ENCODE measurements at regions of chr15 and their contacts with region 1.

Region 1: DNA sequence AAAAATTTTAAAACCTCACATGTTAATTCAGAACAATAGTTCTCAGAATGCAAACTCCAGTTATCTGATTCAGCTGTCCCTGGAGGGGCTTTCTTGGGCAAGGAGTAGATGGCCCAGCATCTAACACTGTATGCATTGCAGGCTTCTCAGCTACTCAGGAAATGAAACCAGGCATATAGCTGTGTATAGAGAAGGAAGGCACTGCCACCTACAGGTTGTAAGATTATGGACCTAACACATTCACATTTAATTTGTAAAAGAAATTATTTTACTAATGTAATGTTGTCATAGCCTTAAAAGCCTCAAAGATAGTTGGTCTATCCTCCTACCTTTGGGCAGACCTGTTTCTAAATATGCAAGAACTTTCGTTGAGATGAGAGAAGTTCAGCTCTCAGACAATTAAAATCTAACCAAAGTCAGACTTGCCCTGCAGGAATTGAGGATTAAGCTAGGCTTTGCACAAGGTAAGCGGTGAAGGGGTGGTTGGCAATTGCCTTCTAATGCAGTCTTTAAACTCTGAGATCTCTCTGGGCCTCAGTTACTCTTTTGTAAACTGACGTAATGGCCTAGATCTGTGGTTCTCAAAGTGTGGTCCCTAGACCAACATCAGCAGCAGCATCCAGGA is 132.8 kb upstream of the SLC24A5 start:
- DNase-seq: peak; percentile 57
- H3K27ac ChIP-seq: no peak overlapping the region
- CTCF ChIP-seq: peak; percentile 85

Region 2: GRCh38 chr15:47196057-47196456 is 792.0 kb before region 1 on chr15:
- CTCF ChIA-PET with region 1: interaction called, 29 read pairs
- POLR2A ChIA-PET with region 1: no interaction called
- DNase-seq: peak; percentile 68
- H3K27ac ChIP-seq: no peak overlapping the region
- CTCF ChIP-seq: peak; percentile 88

Region 3: GRCh38 chr15:47711654-47712053 is 276.4 kb before region 1 on chr15:
- CTCF ChIA-PET with region 1: interaction called, 25 read pairs
- POLR2A ChIA-PET with region 1: no interaction called
- DNase-seq: no peak
- H3K27ac ChIP-seq: no peak overlapping the region
- CTCF ChIP-seq: peak; percentile 77

Region 4: DNA sequence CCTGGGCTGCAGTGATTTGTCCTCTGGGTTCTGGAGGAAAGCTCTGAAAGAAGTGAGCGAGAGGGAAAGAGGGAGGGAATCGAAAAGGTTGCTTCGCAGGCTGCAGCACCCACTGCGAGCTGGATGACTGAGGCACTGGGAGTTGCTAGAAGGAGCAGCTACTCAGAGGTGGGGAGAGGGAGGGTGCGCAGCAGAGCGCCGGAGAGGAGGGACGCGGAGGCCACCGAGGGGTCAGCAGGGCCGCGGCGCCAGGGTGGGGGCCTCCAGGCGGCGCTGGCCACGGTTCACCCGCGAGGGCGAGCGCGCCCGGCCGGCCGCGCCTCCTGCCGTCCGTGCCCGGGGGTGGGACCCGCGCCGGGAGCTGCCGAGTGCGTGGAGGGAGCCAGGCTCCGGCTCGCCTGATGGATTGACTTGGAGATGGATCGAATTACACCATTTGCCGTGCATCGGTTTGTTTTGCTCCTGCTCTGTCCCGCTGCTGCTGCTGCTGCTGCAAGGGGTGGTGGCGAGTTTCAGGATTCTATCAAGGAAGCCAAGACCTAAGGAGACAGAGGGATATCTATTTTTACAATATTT is 270.9 kb before region 1 on chr15 and contains the start of gene SEMA6D:
- CTCF ChIA-PET with region 1: interaction called, 25 read pairs
- POLR2A ChIA-PET with region 1: no interaction called
- DNase-seq: peak; percentile 86
- H3K27ac ChIP-seq: peak within 1 kb of the TSS; percentile 82
- CTCF ChIP-seq: peak; percentile 83

Region 5: DNA sequence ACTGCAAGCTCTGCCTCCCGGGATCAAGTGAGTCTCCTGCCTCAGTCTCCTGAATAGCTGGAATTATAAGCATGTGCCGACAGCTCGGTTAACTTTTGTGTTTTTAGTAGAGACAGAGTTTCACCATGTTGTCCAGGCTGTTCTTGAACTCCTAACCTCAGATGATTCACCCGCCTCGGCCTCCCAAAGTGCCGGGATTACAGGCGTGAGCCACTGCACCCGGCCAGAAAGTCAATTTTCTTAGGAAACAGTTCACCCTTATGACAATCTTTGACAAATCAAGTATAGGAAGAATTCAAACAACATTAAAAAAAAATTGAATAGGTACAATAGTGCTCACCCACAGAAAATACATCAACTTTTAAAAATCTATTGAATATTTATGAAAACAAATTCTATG is 319.6 kb after region 1 on chr15:
- CTCF ChIA-PET with region 1: no interaction called
- POLR2A ChIA-PET with region 1: no interaction called
- DNase-seq: no peak
- H3K27ac ChIP-seq: no peak overlapping the region
- CTCF ChIP-seq: no peak

Measured in RWPE1 (cell line).